Activated T-helper 1 cell treated with anti-CD3 and anti-CD28 coated beads, Interleukin-12 subunit alpha, Interleukin-12 subunit beta, Interleukin-2, Interleukin-4 antibody, amounts not matched to agents 30 ng/mL and 10 ng/mL and 1 ng/mL, durations not matched to agents 14 hours and 24 hours and 36 hours (primary cell): ENCODE measurements at regions of chr14 and their contacts with region 1.

Region 1: DNA sequence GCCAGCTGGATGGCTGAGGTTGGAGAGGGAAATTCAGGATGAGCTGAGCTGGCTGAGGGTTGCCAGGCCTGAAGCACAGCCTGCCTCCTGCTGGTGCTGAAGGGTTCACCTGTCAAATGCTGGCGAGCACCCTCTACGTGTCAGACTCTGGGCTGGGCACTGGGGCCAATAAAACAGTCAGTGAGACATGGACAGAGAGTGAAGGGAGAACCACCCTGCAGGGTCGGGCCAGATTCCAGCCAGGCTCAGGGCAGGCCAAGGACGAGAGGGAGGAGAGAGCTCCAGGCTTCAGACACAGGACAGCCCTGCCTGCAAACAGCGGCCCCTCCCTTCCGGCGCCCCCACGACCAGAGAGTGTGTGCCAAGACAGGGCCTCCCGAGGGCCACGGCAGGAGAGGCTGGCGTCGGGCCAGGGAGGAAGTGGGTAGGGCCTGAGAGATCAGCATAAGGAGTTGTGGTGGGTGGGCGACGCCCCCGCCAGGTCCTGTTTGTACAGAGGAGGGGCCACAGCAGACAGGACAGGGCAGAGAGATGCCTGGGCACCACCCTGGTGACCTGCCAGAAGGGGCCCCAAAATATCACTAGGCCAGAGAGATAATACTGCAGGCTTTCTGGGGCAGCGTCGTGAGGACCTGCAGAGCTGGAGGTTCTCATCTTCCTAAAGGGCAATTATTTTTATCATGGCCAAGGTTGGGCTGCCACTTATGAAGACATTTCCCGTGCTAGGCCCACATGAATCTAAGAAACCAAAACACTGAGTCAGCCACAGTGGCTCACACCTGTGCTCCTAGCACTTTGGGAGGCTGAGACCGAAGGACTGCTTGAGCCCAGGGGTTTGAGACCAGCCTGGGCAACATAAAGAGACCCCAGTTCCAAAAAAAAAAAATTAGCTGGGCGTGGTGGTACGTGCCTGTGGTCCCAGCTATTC is 73.1 kb upstream of the GPR68 start:
- DNase-seq: peak; percentile 66
- H3K4me3 Mint-ChIP-seq: peak overlapping the region; percentile 75
- H3K27ac Mint-ChIP-seq: peak overlapping the region; percentile 96
- H3K4me1 Mint-ChIP-seq: peaks cover 68% of the 10 kb centered on the region
- H3K27me3 Mint-ChIP-seq: no peaks in the 10 kb centered on the region

Region 2: GRCh38 chr14:91303091-91303923 is 14.3 kb before region 1 on chr14:
- intact Hi-C with region 1: loop called (anchors 1 kb)
- DNase-seq: peak; percentile 36
- H3K4me3 Mint-ChIP-seq: peak overlapping the region; percentile 63
- H3K27ac Mint-ChIP-seq: peak overlapping the region; percentile 98
- H3K4me1 Mint-ChIP-seq: peaks cover 72% of the 10 kb centered on the region
- H3K27me3 Mint-ChIP-seq: no peaks in the 10 kb centered on the region

Region 3: GRCh38 chr14:91866061-91866460 is 548.4 kb after region 1 on chr14:
- intact Hi-C with region 1: loop called (anchors 10 kb)
- DNase-seq: no peak
- H3K4me3 Mint-ChIP-seq: peak overlapping the region; percentile 95
- H3K27ac Mint-ChIP-seq: peak overlapping the region; percentile 97
- H3K4me1 Mint-ChIP-seq: peaks cover 89% of the 10 kb centered on the region
- H3K27me3 Mint-ChIP-seq: no peaks in the 10 kb centered on the region